ENCODE measurements at regions of chr14 and their contacts with region 1.

Region 1: GRCh38 chr14:76812211-76813044 is at the start of gene ANGEL1:
- DNase-seq: peak; percentile 98
- H3K4me3 Mint-ChIP-seq: peak within 1 kb of the TSS; percentile 92
- H3K27ac Mint-ChIP-seq: peak within 1 kb of the TSS; percentile 80
- H3K4me1 Mint-ChIP-seq: peaks cover 19% of the 10 kb centered on the region
- H3K27me3 Mint-ChIP-seq: no peaks in the 10 kb centered on the region
- total RNA-seq, gene ANGEL1: 14.6 to 15.9 TPM

Region 2: GRCh38 chr14:76396714-76397187 is 415.7 kb before region 1 on chr14:
- CTCF ChIA-PET with region 1: no interaction called
- POLR2A ChIA-PET with region 1: no interaction called
- intact Hi-C with region 1: no loop called
- DNase-seq: no peak
- H3K4me3 Mint-ChIP-seq: no peak overlapping the region
- H3K27ac Mint-ChIP-seq: no peak overlapping the region
- H3K4me1 Mint-ChIP-seq: no peaks in the 10 kb centered on the region
- H3K27me3 Mint-ChIP-seq: no peaks in the 10 kb centered on the region

Region 3: GRCh38 chr14:76752744-76753143 is 59.7 kb before region 1 on chr14:
- CTCF ChIA-PET with region 1: no interaction called
- POLR2A ChIA-PET with region 1: no interaction called
- intact Hi-C with region 1: no loop called
- DNase-seq: no peak
- H3K4me3 Mint-ChIP-seq: no peak overlapping the region
- H3K27ac Mint-ChIP-seq: no peak overlapping the region
- H3K4me1 Mint-ChIP-seq: no peaks in the 10 kb centered on the region
- H3K27me3 Mint-ChIP-seq: peaks cover 1% of the 10 kb centered on the region

Region 4: DNA sequence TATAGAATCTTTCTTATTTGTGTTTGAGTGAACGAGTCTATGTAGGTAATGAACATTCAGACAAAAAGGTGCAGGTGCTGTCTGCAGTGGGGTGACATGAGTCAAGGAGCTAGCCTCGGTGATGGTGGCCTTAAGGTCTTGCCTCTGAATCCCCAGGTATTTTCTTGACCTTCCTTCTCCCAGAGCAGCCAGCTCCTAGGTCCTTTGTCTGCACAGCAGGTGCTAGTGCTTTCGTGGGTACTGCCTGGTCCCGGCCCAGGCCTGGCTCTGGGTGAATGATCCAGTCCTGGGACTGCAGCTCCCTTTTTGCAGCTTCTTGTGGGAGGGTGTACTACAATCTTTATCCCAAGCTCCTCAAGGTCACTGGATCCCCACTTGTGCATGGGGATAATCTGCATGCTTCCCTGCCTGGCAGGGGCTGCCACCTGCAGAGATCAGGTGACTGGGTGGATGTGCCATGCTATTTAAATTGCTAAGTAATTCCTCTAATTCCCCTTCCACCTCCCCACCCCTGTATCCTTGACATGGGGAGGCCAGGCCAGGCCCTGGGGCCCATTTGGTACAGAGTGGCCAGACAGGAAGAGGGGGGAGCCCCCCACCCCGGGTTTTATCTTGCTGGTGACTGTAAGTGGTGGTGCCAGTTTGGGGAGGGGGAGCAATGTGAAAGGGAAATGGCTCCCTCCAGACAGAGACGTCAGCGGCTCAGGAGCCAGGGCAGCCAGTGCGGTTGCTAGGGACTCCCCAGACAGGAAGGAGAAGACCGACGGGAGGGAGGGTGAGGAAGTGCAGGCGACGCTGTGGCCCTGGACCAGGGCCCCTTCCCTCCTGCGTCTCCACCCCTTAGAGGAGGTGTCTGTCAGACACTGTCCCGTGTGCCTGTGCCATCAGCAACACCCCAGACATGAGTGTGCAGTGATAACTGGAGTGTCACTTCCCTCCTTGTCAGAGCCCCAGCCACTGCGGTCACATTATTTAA is 44.5 kb before region 1 on chr14:
- CTCF ChIA-PET with region 1: no interaction called
- POLR2A ChIA-PET with region 1: interaction called, 3 read pairs
- intact Hi-C with region 1: loop called (anchors 2 kb)
- DNase-seq: peak; percentile 89
- H3K4me3 Mint-ChIP-seq: no peak overlapping the region
- H3K27ac Mint-ChIP-seq: peak overlapping the region; percentile 79
- H3K4me1 Mint-ChIP-seq: peaks cover 22% of the 10 kb centered on the region
- H3K27me3 Mint-ChIP-seq: no peaks in the 10 kb centered on the region

Region 5: DNA sequence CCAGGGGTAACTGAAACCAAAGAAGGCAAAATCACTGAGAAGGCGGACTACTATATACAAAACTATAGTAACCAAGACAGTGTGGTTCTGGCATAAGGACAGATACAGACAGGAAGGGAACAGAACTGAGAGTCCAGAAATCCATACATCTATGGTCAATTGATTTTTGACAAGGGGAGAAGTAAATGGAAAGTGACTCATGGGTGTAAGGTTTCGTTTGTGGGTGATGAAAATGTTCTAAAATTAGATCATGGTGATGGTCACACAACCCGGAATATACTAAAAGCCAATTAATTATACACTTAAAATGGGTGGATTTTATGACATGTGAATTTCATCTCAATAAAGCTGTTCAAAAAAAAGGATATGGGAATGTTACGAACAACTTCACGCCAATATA is 18.5 kb before region 1 on chr14:
- CTCF ChIA-PET with region 1: no interaction called
- POLR2A ChIA-PET with region 1: no interaction called
- intact Hi-C with region 1: no loop called
- DNase-seq: no peak
- H3K4me3 Mint-ChIP-seq: no peak overlapping the region
- H3K27ac Mint-ChIP-seq: no peak overlapping the region
- H3K4me1 Mint-ChIP-seq: no peaks in the 10 kb centered on the region
- H3K27me3 Mint-ChIP-seq: no peaks in the 10 kb centered on the region

Region 6: GRCh38 chr14:76844223-76844622 is 31.8 kb after region 1 on chr14:
- CTCF ChIA-PET with region 1: no interaction called
- POLR2A ChIA-PET with region 1: no interaction called
- intact Hi-C with region 1: loop called (anchors 1 kb)
- DNase-seq: peak; percentile 83
- H3K4me3 Mint-ChIP-seq: no peak overlapping the region
- H3K27ac Mint-ChIP-seq: peak overlapping the region; percentile 53
- H3K4me1 Mint-ChIP-seq: peaks cover 5% of the 10 kb centered on the region
- H3K27me3 Mint-ChIP-seq: peaks cover 7% of the 10 kb centered on the region

Region 7: DNA sequence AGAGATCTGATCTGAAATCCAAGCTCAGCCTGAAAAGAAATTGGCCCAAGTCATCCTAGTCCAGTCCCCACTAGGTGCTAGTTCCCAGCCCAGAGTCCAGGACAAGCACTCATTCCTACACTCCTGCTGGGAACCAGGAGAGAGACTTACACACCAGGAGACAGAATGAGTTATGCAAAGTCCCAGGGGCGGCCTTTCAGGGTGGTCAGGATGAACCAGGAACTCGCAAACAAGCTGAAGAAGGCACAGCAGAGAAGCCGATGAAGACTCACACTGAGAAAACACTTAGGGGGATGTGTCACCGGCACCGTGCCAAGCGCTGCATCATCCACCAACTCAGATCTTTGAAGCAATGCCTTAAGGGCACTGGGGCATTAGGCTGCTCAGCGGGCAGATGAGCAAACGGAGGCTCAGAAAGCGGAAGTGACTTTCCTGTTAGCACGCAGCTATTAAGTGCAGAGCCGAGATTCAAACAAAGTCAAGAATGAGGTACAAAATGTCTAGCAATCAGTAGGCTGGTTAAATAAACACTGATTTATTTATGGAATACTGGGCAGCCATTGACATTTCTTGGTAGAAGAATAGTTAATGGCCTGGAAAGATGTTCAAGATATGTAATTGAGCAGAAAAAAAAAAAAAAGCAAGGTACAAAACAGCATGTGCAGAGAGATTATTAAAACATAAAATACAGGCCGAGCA is 92.5 kb after region 1 on chr14:
- CTCF ChIA-PET with region 1: no interaction called
- POLR2A ChIA-PET with region 1: no interaction called
- intact Hi-C with region 1: loop called (anchors 5 kb)
- DNase-seq: peak; percentile 93
- H3K4me3 Mint-ChIP-seq: peak overlapping the region; percentile 14
- H3K27ac Mint-ChIP-seq: peak overlapping the region; percentile 70
- H3K4me1 Mint-ChIP-seq: peaks cover 28% of the 10 kb centered on the region
- H3K27me3 Mint-ChIP-seq: no peaks in the 10 kb centered on the region

Region 8: DNA sequence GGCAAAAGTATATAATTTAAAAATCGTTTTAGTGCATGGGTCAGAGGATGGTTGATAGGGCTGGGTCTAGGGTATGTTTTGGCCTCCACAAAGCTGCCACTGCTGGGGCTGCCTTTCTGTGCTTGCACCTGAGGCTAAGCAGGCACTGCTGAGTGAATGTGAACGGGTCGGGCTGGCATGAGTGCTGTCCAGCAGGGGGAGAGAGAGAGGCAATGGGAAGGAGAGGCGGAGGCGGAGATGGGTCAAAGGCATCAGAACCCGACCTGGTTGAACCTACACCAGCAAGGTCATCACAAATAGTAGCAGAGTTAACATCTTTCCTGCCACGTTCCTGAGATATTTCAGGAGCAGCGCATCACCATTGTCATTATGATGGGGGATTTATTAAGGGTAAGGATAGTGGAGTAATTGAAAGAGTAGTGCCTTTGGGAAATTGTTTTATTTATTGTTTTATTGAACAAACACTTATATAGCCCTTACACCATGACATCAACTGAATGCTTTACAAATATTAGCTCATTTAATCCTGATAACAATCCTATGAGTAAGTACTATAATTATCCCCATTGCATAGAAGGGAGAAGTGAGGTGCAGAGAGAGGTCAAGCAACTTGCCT is 1351.9 kb after region 1 on chr14:
- CTCF ChIA-PET with region 1: no interaction called
- POLR2A ChIA-PET with region 1: no interaction called
- intact Hi-C with region 1: no loop called
- DNase-seq: peak; percentile 13
- H3K4me3 Mint-ChIP-seq: no peak overlapping the region
- H3K27ac Mint-ChIP-seq: no peak overlapping the region
- H3K4me1 Mint-ChIP-seq: no peaks in the 10 kb centered on the region
- H3K27me3 Mint-ChIP-seq: peaks cover 11% of the 10 kb centered on the region